Mammary epithelial cell (primary cell): ENCODE measurements at regions of chr1 and their contacts with region 1.

Region 1: DNA sequence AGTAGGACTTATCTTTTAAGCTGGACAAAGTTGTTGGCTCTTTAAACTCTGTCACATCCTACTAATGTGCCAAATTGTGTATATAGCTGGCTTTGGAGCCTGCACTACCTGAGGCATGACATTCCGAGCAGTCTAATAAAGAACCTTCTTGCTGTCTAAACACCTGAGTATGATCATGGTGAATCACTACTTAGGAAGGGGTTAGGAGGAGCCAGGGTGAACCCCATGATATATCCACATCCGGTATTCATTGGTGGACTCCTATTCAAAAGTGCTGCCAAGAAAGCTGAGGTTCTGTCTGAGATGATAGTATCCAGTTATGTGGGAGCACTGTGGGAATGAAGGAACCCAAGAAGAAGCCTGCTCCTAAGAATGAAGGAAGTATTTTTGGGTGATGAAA is 27.1 kb downstream of the CRNN start:
- DNase-seq: peak; percentile 87
- H3K4me3 ChIP-seq: no peak overlapping the region
- H3K27ac ChIP-seq: no peak overlapping the region
- H3K4me1 ChIP-seq: no peaks in the 10 kb centered on the region
- H3K27me3 ChIP-seq: peaks cover 23% of the 10 kb centered on the region
- CTCF ChIP-seq: no peak

Region 2: DNA sequence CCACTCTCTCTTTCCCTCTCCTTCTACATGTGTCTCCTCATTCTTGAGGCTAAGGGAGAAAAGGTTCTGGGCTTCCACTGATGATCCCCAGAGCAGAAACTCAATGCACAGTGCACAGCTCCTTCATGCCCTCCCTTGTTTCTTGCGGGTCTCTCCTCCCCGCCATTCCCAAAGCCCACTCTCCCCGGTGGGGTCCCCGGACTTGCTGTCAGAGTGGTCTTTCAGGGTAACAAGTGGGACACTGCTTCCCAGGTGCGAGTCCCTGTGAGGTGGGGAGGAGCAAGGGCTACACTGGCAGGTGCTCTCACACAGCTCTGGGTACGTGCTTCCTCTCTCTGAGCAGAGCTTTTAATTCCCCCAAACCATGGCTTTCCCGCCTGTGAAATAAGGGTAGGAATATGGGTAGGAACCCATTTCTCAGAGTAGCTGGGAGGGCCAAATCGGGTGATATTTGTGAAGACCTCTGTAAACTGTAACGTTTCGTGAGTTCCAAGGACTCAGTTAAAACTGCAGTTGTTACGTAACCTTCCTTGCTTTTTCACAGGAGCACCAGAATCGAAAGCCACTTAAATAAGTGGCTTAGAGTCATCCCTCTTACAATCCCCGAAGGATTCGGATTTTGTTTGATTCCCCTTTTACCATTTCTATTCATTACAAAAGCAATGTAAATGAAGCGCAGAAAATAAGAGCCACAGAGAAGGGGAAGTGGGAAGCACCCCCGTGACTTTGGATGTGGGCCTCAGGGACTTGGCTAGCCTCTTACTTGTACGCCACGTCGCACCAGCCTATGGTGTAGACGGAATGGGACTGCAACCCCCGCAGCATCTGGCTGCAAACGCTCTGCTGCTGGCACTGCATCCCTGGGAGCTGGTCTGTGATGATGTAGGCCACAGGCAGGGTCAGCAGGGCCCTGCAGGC is 919.6 kb after region 1 on chr1:
- CTCF ChIA-PET with region 1: no interaction called
- dilution Hi-C with region 1: no loop called
- in situ Hi-C with region 1: no loop called
- intact Hi-C with region 1: loop called (anchors 5 kb)
- DNase-seq: no peak
- H3K4me3 ChIP-seq: no peak overlapping the region
- H3K27ac ChIP-seq: no peak overlapping the region
- H3K4me1 ChIP-seq: no peaks in the 10 kb centered on the region
- H3K27me3 ChIP-seq: peaks cover 4% of the 10 kb centered on the region
- CTCF ChIP-seq: no peak